ENCODE measurements at regions of chr18 and their contacts with region 1.

Region 1: GRCh38 chr18:11980555-11981382 is 538 bp upstream of the IMPA2 start:
- DNase-seq: peak; percentile 99
- ATAC-seq: peak; percentile 88
- H3K4me3 ChIP-seq: peak overlapping the region; percentile 73
- H3K27ac ChIP-seq: peak overlapping the region; percentile 81
- H3K4me1 ChIP-seq: peaks cover 33% of the 10 kb centered on the region
- H3K27me3 ChIP-seq: no peaks in the 10 kb centered on the region
- CTCF ChIP-seq: 0 out of 2 replicates have a peak, but pooled peaks have one; percentile 24

Region 2: GRCh38 chr18:10299643-10300042 is 1681.1 kb before region 1 on chr18:
- CTCF ChIA-PET with region 1: no interaction called
- POLR2A ChIA-PET with region 1: no interaction called
- intact Hi-C with region 1: no loop called
- DNase-seq: no peak
- ATAC-seq: no peak
- H3K4me3 ChIP-seq: no peak overlapping the region
- H3K27ac ChIP-seq: no peak overlapping the region
- H3K4me1 ChIP-seq: no peaks in the 10 kb centered on the region
- H3K27me3 ChIP-seq: peaks cover 29% of the 10 kb centered on the region
- CTCF ChIP-seq: no peak

Region 3: GRCh38 chr18:10525371-10526210 is 1455.2 kb before region 1 on chr18 and contains the start of gene NAPG:
- CTCF ChIA-PET with region 1: no interaction called
- POLR2A ChIA-PET with region 1: interaction called, 10 read pairs
- intact Hi-C with region 1: no loop called
- DNase-seq: peak; percentile 93
- ATAC-seq: peak; percentile 82
- H3K4me3 ChIP-seq: peak within 1 kb of the TSS; percentile 98
- H3K27ac ChIP-seq: peak within 1 kb of the TSS; percentile 37
- H3K4me1 ChIP-seq: peaks cover 23% of the 10 kb centered on the region
- H3K27me3 ChIP-seq: 0 out of 2 replicates have a peak, but pooled peaks cover 3% of the 10 kb centered on the region
- CTCF ChIP-seq: no peak
- total RNA-seq, gene NAPG: 24.0 and 24.7 TPM in 2 replicates

Region 4: GRCh38 chr18:11908182-11909060 is 72.3 kb before region 1 on chr18 and contains the start of gene MPPE1:
- CTCF ChIA-PET with region 1: no interaction called
- POLR2A ChIA-PET with region 1: interaction called, 6 read pairs
- intact Hi-C with region 1: loop called (anchors 1 kb)
- DNase-seq: peak; percentile 86
- ATAC-seq: peak; percentile 87
- H3K4me3 ChIP-seq: peak within 1 kb of the TSS; percentile 91
- H3K27ac ChIP-seq: peak within 1 kb of the TSS; percentile 81
- H3K4me1 ChIP-seq: peaks cover 31% of the 10 kb centered on the region
- H3K27me3 ChIP-seq: no peaks in the 10 kb centered on the region
- CTCF ChIP-seq: no peak
- total RNA-seq, gene MPPE1: 15.8 and 17.9 TPM in 2 replicates

Region 5: GRCh38 chr18:11947214-11948191 is 33.3 kb before region 1 on chr18:
- CTCF ChIA-PET with region 1: no interaction called
- POLR2A ChIA-PET with region 1: interaction called, 13 read pairs
- intact Hi-C with region 1: no loop called
- DNase-seq: peak; percentile 78
- ATAC-seq: peak; percentile 81
- H3K4me3 ChIP-seq: no peak overlapping the region
- H3K27ac ChIP-seq: peak overlapping the region; percentile 34; the same call in 1 of the 2 replicates
- H3K4me1 ChIP-seq: peaks cover 10% of the 10 kb centered on the region; the same call in 1 of the 2 replicates
- H3K27me3 ChIP-seq: no peaks in the 10 kb centered on the region
- CTCF ChIP-seq: no peak

Region 6: DNA sequence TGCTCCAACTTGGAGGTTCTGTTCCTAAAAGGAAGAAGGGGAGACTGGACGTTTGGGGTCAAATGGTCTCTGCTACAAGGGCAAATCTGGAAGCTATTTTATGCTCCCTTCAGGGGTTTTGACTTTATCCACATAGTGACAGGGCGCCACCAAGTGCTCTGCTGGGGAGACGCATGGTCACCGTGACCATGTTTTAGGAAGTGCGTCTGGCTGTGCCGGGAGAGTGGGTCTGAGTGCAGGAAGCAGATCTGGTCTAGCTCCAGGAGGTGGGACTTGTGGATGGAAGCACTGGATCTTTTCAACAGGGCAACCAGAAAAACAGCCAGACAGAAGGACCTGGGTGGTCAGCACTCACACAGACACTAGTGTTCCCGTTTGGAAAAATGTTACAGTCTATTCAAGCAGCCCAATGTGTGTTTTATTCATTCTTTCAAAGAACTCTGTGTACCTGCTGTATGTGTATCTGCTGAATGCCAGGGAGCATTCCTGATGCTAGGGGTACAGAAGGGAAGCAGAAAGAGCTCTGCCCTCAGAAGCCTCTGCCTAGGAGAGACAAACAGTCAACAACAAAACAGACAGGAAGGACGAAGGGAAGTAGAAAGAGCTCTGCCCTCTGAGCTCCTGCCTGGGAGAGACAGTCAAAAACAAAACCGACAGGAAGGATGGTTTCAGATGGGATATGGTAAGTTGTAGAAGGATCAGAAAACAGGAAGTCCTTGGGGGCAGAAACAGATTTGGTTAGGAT is 14.8 kb after region 1 on chr18:
- CTCF ChIA-PET with region 1: interaction called, 48 read pairs
- POLR2A ChIA-PET with region 1: interaction called, 7 read pairs
- intact Hi-C with region 1: no loop called
- DNase-seq: peak; percentile 81
- ATAC-seq: peak; percentile 84
- H3K4me3 ChIP-seq: peak overlapping the region; percentile 37; the same call in 1 of the 2 replicates
- H3K27ac ChIP-seq: peak overlapping the region; percentile 89
- H3K4me1 ChIP-seq: peaks cover 31% of the 10 kb centered on the region
- H3K27me3 ChIP-seq: no peaks in the 10 kb centered on the region
- CTCF ChIP-seq: peak; percentile 96

Region 7: DNA sequence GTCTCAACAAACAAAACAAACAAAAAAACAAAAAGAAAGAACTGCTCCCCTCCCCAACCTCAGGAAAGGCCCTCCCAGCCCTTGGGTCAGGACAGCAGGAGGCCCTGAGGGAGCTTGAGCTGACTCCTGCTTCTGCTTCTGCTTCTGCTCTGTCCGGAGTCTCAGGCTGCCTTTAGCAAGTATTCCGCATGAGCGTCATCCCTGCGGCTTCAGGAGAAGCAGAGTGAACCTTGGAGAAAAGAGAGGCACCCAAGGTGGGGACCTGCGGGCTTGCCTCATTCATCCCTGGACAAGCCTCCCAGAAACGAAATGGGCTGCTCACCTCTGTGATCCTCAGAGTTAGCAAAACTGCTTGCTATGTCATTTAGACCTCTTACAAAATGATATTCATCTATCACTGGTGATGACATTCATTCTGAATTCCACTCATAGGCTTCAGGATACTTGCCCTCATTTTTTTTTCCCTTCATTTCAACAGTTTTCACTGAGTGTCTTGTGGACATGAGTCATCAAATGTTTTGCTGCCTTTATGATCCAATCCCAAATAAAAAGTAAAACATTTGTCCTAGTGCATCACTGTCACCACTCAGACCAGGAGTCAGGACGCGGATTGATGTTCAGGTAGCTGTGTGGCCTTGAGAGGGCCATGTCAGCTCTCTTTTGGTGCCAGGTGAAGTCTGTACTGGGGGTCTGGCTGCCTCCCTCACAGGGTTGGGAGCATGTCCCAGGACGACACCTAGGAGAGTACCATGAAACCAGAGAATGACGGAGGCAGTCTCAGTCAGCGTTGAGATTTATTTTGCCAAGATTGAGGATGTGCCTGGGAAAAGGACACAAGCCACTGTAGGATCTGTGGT is 52.2 kb after region 1 on chr18:
- CTCF ChIA-PET with region 1: no interaction called
- POLR2A ChIA-PET with region 1: interaction called, 53 read pairs
- intact Hi-C with region 1: no loop called
- DNase-seq: peak; percentile 18
- ATAC-seq: peak; percentile 67
- H3K4me3 ChIP-seq: no peak overlapping the region
- H3K27ac ChIP-seq: no peak overlapping the region
- H3K4me1 ChIP-seq: no peaks in the 10 kb centered on the region
- H3K27me3 ChIP-seq: no peaks in the 10 kb centered on the region
- CTCF ChIP-seq: no peak

Region 8: DNA sequence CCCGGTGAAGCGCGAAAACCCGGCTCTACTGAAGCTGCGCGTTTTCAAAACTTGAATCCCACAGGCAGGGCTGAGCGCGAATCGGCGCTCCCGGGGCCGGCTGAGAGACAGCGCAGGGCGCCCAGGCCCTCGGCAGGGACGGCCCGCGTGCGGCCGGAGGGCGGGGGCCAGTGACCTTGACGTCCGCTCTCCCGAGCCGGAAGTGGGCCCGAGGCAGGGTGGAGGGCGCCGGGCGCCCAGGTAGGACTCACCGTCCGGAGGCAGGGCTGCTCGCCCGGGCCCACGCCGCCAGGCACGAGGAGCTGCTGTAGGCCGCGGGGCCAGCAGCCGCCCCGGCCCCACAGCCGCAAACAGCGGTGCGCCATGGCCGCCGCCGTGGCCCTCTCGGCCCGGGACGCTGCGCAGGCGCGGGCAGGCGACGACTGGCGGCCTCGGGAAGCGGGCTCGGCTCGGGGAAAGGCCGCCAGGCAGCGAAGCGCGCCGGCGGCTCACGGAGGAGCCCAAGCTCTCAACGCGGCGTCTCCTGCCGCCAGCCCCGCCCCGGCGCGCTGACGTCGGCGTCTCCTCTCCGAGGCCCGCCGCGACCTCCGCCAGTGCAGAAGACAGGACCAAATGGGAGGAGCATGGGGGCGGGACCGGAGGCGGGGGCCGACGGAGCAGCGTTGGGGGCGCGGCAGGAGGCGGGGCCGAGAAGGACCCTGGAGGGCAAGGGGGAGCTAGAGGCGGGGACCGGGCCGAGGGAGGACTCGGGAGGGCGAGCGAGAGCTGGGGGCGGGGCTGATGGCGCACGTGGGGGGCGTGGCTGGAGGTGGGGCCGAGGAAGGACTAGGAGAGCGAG is 396.2 kb after region 1 on chr18 and contains the start of gene AFG3L2:
- CTCF ChIA-PET with region 1: no interaction called
- POLR2A ChIA-PET with region 1: no interaction called
- intact Hi-C with region 1: loop called (anchors 10 kb)
- DNase-seq: peak; percentile 98
- ATAC-seq: peak; percentile 84
- H3K4me3 ChIP-seq: peak within 1 kb of the TSS; percentile 84
- H3K27ac ChIP-seq: peak within 1 kb of the TSS; percentile 94
- H3K4me1 ChIP-seq: peaks cover 29% of the 10 kb centered on the region
- H3K27me3 ChIP-seq: no peaks in the 10 kb centered on the region
- CTCF ChIP-seq: no peak
- total RNA-seq, gene AFG3L2: 79.3 and 95.7 TPM in 2 replicates

Measured in PC-3 (cell line).